ENCODE measurements at regions of chr1 and their contacts with region 1.

Region 1: GRCh38 chr1:16032388-16033103 is 10.7 kb downstream of the CLCNKA start:
- DNase-seq: peak; percentile 87 to 96
- ATAC-seq: peak; percentile 96 to 99 (median 98)
- H3K4me3 ChIP-seq: no peak overlapping the region
- H3K27ac ChIP-seq: no peak overlapping the region
- H3K4me1 ChIP-seq: no peaks in the 10 kb centered on the region
- H3K27me3 ChIP-seq: peaks cover 0 to 2% (median 0%) of the 10 kb centered on the region in 3 donors
- CTCF ChIP-seq: peak; percentile 99

Region 2: DNA sequence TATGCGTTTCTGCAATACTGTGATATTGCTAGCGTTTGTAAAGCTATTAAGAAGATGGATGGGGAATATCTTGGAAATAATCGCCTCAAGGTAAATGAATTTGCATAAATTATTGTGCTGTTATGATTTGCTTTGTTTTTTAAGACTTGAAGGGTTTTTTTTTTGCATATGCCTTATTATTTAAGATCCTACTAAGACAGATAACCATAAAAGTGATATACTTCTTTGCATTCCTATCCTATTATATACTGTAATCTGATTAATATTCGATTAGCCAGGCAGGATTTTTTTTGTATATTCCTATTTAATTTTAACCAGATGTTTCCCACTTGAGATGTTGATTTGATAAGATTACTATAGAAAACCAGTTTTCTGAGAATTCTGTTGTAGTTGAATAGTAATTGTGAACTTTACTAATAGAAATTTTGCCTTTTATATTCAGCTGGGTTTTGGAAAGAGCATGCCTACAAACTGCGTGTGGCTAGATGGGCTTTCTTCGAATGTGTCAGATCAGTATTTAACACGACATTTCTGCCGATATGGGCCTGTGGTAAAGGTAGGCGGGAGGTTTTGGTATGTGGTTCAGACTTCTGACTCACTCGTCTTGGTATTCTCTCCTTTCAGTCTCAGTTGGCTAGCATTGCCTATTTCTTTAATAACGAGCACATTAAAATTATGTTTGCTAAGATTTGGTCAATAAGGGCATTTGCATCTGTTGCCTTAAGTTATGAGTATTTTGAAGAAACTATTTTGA is 113.4 kb before region 1 on chr1:
- intact Hi-C with region 1: no loop called
- DNase-seq: no peak
- ATAC-seq: no peak
- H3K4me3 ChIP-seq: no peak overlapping the region
- H3K27ac ChIP-seq: no peak overlapping the region
- H3K4me1 ChIP-seq: peaks cover 6% of the 10 kb centered on the region
- H3K27me3 ChIP-seq: no peaks in the 10 kb centered on the region
- CTCF ChIP-seq: no peak

Region 3: GRCh38 chr1:16009030-16009709 is 23.4 kb before region 1 on chr1:
- intact Hi-C with region 1: loop called (anchors 1 to 2 kb)
- DNase-seq: peak; percentile 82 to 91
- ATAC-seq: peak; percentile 17 to 39 (median 32)
- H3K4me3 ChIP-seq: no peak overlapping the region
- H3K27ac ChIP-seq: peak overlapping the region; percentile 9
- H3K4me1 ChIP-seq: peaks cover 17% of the 10 kb centered on the region
- H3K27me3 ChIP-seq: no peaks in the 10 kb centered on the region
- CTCF ChIP-seq: peak; percentile 98

Measured in psoas muscle (tissue), 8 donors.